GM12878 (cell line): ENCODE measurements at regions of chr2 and their contacts with region 1.

Region 1: DNA sequence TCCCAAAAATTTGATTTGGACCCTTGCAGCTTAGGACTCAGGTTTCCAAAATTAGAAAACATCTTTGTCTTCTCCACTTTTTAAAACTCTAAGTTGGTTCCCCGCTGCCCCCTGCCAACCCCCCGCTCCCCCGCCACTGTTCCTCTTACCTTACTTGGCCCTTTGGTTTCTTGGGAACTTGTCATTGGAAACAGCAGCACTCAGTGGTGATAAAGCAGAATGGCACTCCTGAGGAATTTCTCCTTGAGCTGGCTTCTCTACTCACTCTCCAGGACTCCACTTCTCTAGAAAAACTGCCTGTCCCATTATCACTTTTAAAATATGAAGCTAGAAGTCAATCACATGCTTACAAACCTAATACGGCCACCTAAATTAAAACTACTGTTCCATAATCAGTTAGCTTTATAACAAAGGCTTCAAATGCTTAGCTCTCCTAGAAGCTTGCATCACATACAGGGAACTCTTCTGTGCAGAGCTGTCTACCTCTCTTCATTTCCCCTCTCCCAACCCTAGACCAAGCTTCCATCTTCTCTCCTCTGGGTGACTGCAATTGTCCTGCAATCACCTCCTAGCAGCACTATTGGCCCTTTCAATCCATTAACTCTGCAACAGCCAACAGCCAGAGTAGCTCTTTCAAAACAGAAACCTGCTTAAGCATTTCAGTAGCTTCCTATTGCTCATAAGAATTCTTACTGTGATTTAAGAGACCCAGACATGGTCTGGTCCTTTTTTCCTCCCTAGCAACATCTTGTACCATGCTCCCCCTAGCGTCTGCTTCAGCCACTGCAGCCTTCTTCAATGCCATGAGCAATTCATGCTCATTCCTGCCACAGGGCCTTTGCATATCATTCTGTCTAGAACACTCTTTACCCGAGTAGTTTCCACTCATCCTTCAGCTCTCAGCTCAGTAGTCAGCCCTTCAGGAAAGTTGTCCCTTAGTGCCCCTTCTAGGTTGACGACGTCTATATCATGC is 15.2 kb upstream of the PLEKHM3 start:
- DNase-seq: no peak
- ATAC-seq: peak; percentile 96
- H3K4me3 ChIP-seq: no peak overlapping the region
- H3K27ac ChIP-seq: no peak overlapping the region
- H3K4me1 ChIP-seq: no peaks in the 10 kb centered on the region
- H3K27me3 ChIP-seq: no peaks in the 10 kb centered on the region; a peak in 1 of 4 replicates
- CTCF ChIP-seq: peak; percentile 80 to 93 (median 93)
- EP300 ChIP-seq: no peak
- POLR2A ChIP-seq: no peak
- RAD21 ChIP-seq: peak; percentile 63

Region 2: GRCh38 chr2:207746131-207746530 is 294.4 kb before region 1 on chr2:
- CTCF ChIA-PET with region 1: interaction called, 108 read pairs
- POLR2A ChIA-PET with region 1: no interaction called
- RAD21 ChIA-PET with region 1: interaction called, 56 read pairs
- SMC1A ChIA-PET with region 1: interaction called, 80 read pairs
- in situ Hi-C with region 1: no loop called
- intact Hi-C with region 1: loop called (anchors 1 kb)
- DNase-seq: no peak
- ATAC-seq: peak; percentile 97
- H3K4me3 ChIP-seq: no peak overlapping the region
- H3K27ac ChIP-seq: no peak overlapping the region
- H3K4me1 ChIP-seq: no peaks in the 10 kb centered on the region
- H3K27me3 ChIP-seq: no peaks in the 10 kb centered on the region
- CTCF ChIP-seq: peak; percentile 91 to 93 (median 91)
- EP300 ChIP-seq: no peak
- POLR2A ChIP-seq: no peak
- RAD21 ChIP-seq: peak; percentile 100

Region 3: DNA sequence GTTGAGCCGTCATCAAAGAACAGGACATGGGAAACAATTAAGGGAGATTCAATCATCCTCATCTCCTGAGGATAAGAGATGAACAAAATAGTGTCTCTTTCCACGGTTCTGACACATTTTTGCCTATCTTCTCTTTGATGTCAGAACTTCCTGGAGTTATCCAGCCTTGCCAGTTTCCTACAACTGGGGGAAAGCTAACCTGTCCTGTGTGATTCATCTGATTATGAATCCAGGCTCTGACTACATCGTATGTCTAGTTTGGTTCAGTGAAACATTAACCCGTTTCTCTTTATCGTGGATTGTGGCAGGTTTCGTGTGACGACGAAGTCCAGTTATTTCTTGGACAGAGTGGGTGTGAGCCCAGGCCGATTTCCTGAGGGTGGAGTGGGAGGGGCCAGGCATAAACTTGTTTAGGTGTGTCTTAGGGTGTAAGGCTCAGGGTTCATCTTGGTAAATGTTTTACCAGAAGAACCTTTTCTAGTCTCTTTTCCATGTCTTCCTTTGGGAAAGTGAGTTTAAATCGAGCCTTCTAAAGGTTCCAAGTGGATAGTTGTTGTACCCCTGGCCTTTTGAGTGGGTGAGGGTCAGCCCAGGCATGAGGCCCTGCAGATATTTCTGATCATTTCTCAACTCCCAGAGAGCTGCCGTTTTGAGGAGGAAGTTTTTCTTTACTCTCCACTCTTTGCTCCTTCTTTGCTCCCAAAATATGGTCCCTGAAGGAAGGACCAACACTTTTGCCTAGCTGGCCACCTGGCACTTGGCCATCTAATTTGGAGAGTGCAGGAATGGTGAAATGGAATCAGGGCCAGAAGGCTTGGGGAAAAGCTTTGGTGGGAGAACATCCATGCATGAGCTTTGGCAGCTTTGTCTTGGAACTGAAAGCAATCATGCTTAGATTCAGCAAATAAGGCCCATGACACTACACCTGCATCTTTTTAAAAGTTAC is 220.4 kb before region 1 on chr2:
- CTCF ChIA-PET with region 1: no interaction called
- POLR2A ChIA-PET with region 1: no interaction called
- RAD21 ChIA-PET with region 1: no interaction called
- SMC1A ChIA-PET with region 1: no interaction called
- in situ Hi-C with region 1: no loop called
- intact Hi-C with region 1: no loop called
- DNase-seq: no peak
- ATAC-seq: no peak
- H3K4me3 ChIP-seq: no peak overlapping the region
- H3K27ac ChIP-seq: no peak overlapping the region
- H3K4me1 ChIP-seq: no peaks in the 10 kb centered on the region
- H3K27me3 ChIP-seq: no peaks in the 10 kb centered on the region
- CTCF ChIP-seq: no peak
- EP300 ChIP-seq: no peak
- POLR2A ChIP-seq: no peak
- RAD21 ChIP-seq: no peak

Region 4: DNA sequence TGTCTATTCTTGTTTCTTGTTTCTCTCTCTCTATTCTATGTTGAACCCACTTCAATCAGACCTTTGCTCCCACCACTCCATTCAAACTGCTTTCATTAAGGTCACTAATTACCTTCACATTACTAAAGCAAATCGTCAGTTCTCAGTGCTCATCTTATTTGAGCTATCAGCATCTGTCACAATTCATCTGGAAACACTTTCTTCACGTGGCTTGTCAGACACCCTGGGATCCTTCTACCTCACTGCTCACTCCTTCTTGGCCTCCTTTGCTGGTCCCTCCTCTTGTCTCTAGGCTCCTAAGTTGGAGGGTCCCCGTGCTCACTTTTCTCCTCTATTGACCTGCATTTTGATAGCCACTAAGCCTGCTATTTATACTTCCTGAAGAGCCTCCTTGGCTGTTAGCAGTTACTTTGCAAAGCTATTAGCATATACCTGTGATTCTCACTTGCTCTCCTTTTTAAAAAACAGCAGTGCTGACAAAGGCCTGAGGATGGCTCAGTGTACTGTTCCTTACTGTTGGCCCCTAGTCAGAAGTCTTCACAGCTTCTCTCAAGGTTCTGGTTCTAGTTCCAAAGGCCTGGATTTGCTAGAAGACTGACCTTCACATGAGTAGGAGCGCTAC is 95.4 kb before region 1 on chr2:
- CTCF ChIA-PET with region 1: no interaction called
- POLR2A ChIA-PET with region 1: no interaction called
- RAD21 ChIA-PET with region 1: no interaction called
- SMC1A ChIA-PET with region 1: no interaction called
- in situ Hi-C with region 1: no loop called
- intact Hi-C with region 1: no loop called
- DNase-seq: no peak
- ATAC-seq: no peak
- H3K4me3 ChIP-seq: no peak overlapping the region
- H3K27ac ChIP-seq: no peak overlapping the region
- H3K4me1 ChIP-seq: no peaks in the 10 kb centered on the region
- H3K27me3 ChIP-seq: no peaks in the 10 kb centered on the region
- CTCF ChIP-seq: no peak
- EP300 ChIP-seq: no peak
- POLR2A ChIP-seq: no peak
- RAD21 ChIP-seq: no peak

Region 5: GRCh38 chr2:207967121-207967520 is 73.4 kb before region 1 on chr2:
- CTCF ChIA-PET with region 1: interaction called, 11 read pairs
- POLR2A ChIA-PET with region 1: no interaction called
- RAD21 ChIA-PET with region 1: interaction called, 5 read pairs
- SMC1A ChIA-PET with region 1: interaction called, 15 read pairs
- in situ Hi-C with region 1: no loop called
- intact Hi-C with region 1: loop called (anchors 2 kb)
- DNase-seq: no peak
- ATAC-seq: no peak
- H3K4me3 ChIP-seq: no peak overlapping the region
- H3K27ac ChIP-seq: no peak overlapping the region
- H3K4me1 ChIP-seq: 0 out of 2 replicates have a peak, but pooled peaks cover 3% of the 10 kb centered on the region
- H3K27me3 ChIP-seq: no peaks in the 10 kb centered on the region
- CTCF ChIP-seq: no peak
- EP300 ChIP-seq: no peak
- POLR2A ChIP-seq: no peak
- RAD21 ChIP-seq: no peak

Region 6: DNA sequence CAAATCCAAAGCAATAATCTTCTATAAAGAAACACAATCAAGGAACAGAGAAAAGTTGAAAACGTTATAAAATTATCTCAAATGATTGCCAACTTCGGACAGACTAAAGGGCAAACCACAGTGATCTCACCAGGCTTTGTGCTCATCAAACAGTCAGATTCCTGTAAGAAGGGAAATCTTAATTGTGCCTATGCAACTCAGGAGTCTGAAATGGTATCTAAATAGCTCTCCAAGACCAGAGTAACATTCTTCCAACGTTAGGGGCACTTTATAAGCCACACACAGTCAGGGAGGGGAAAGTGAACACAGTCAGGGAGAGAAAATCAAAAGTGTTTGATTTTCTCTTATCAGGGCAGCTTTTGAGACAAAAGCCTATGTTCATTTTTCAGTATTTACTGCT is 44.6 kb before region 1 on chr2:
- CTCF ChIA-PET with region 1: interaction called, 10 read pairs
- POLR2A ChIA-PET with region 1: no interaction called
- RAD21 ChIA-PET with region 1: no interaction called
- SMC1A ChIA-PET with region 1: no interaction called
- in situ Hi-C with region 1: no loop called
- intact Hi-C with region 1: no loop called
- DNase-seq: no peak
- ATAC-seq: no peak
- H3K4me3 ChIP-seq: no peak overlapping the region
- H3K27ac ChIP-seq: no peak overlapping the region
- H3K4me1 ChIP-seq: peaks cover 8% of the 10 kb centered on the region; the same call in 1 of the 2 replicates
- H3K27me3 ChIP-seq: no peaks in the 10 kb centered on the region
- CTCF ChIP-seq: no peak
- EP300 ChIP-seq: no peak
- POLR2A ChIP-seq: no peak
- RAD21 ChIP-seq: no peak

Region 7: GRCh38 chr2:208025037-208025813 is 15.3 kb before region 1 on chr2 and contains the start of gene PLEKHM3:
- CTCF ChIA-PET with region 1: interaction called, 30 read pairs
- POLR2A ChIA-PET with region 1: no interaction called
- RAD21 ChIA-PET with region 1: interaction called, 11 read pairs
- SMC1A ChIA-PET with region 1: interaction called, 10 read pairs
- in situ Hi-C with region 1: no loop called
- intact Hi-C with region 1: no loop called
- DNase-seq: no peak
- ATAC-seq: peak; percentile 97
- H3K4me3 ChIP-seq: peak within 1 kb of the TSS; percentile 79
- H3K27ac ChIP-seq: peak within 1 kb of the TSS; percentile 81
- H3K4me1 ChIP-seq: peaks cover 4% of the 10 kb centered on the region
- H3K27me3 ChIP-seq: no peaks in the 10 kb centered on the region
- CTCF ChIP-seq: no peak
- EP300 ChIP-seq: peak in 1 of 2 experiments; percentile 23; a peak in 1 of 4 replicates
- POLR2A ChIP-seq: peak; percentile 85
- RAD21 ChIP-seq: no peak
- polyA plus RNA-seq, gene PLEKHM3: 1.4 to 2.0 TPM

Region 8: DNA sequence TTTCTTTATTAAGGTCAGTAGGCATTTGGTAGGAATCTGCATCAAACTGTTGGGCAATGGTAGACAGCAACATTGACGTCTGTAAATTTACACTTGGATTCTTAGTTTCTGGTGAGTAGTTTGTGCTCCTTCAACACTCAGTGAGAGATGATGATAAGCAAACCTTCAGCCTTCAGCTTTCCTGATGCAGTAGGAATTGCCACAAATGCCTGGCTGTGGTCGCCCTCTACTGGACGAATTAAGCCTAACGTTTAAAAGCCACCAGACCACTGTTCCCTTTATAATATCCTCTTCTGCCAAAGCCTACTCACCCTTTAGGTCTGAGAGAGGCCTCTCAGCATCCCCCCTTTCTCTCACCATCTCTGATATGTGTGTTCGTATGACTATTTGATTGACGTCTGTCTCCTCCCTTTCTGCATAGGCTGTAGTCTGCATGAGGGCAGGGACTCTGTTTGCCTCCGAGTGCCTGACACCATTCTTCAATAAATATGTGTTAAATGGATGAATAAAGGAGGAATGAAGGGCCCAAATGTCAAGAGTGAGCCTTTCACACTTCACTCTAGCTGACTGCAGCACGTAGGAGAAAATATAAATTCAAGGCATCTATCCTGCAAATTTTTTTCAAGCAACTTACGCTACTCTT is 31.9 kb after region 1 on chr2:
- CTCF ChIA-PET with region 1: interaction called, 19 read pairs
- POLR2A ChIA-PET with region 1: no interaction called
- RAD21 ChIA-PET with region 1: interaction called, 6 read pairs
- SMC1A ChIA-PET with region 1: interaction called, 13 read pairs
- in situ Hi-C with region 1: no loop called
- intact Hi-C with region 1: no loop called
- DNase-seq: peak; percentile 19
- ATAC-seq: peak; percentile 97
- H3K4me3 ChIP-seq: no peak overlapping the region
- H3K27ac ChIP-seq: no peak overlapping the region
- H3K4me1 ChIP-seq: no peaks in the 10 kb centered on the region
- H3K27me3 ChIP-seq: no peaks in the 10 kb centered on the region
- CTCF ChIP-seq: peak; percentile 79 to 83 (median 80)
- EP300 ChIP-seq: no peak
- POLR2A ChIP-seq: no peak
- RAD21 ChIP-seq: peak; percentile 92